Activated CD4-positive, alpha-beta memory T cell treated with anti-CD3 and anti-CD28 coated beads for 36 hours (primary cell): ENCODE measurements at regions of chr4 and their contacts with region 1.

Region 1: GRCh38 chr4:36325499-36325898 is 44.1 kb downstream of the DTHD1 start:
- DNase-seq: no peak
- H3K4me3 Mint-ChIP-seq: no peak overlapping the region
- H3K27ac Mint-ChIP-seq: peak overlapping the region; percentile 80
- H3K4me1 Mint-ChIP-seq: peaks cover 60% of the 10 kb centered on the region
- H3K27me3 Mint-ChIP-seq: no peaks in the 10 kb centered on the region

Region 2: DNA sequence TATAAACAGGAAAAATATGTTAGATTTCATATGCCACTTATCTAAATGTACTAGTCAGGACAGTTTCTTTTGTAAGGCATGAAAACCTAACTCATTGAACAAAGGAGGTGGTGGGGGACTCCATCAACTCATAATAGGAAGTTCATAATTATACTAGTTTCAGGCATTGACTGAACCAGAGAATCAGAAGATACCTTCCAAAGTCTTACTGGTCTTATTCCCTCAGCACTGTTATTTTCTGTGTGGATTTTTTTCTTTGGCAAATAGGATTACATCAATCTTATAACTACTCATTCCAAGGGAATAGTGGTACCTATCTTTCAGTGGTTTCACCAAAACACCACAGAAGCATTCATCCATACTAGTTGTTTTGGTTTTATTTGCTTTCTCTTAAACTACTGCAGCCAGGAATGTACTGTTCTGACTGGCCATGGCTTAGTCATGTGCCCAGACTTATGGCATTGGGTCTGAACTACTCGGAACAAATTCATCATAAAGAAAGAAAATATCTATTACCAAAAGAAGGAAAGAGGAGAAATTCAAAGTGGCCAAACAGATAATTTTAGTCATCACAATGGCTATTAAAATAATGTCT is 355.0 kb before region 1 on chr4:
- CTCF ChIA-PET with region 1: no interaction called
- POLR2A ChIA-PET with region 1: no interaction called
- intact Hi-C with region 1: loop called (anchors 10 kb)
- DNase-seq: peak; percentile 53
- H3K4me3 Mint-ChIP-seq: no peak overlapping the region
- H3K27ac Mint-ChIP-seq: no peak overlapping the region
- H3K4me1 Mint-ChIP-seq: peaks cover 11% of the 10 kb centered on the region
- H3K27me3 Mint-ChIP-seq: no peaks in the 10 kb centered on the region

Region 3: DNA sequence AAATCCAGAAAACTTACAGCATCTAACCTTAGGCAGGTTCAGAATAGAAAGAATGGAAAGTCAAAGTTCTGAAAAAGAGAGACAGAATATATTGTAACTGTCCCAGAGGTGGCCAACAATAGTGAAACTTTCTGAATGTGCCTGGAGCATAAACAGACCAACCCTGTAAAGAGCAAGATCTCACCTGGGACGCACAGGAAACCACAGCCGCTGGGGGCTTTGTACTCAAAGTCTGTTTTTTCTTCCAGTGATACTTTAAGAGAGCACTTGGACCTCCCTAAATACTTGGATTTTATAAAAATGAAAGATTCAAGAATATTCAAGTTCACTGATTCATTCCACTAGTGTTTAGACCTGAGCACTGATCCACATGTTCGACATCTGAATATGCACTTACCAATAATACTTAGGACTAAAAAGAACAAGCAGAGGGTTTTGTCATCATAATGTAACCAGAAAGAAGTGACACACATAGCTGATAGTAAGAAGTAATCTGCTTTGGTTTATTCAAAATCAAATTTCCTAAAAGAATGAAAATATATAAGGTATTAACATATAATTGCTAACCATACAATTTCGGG is 116.5 kb before region 1 on chr4:
- CTCF ChIA-PET with region 1: interaction called, 3 read pairs
- POLR2A ChIA-PET with region 1: no interaction called
- intact Hi-C with region 1: loop called (anchors 1 kb)
- DNase-seq: peak; percentile 54
- H3K4me3 Mint-ChIP-seq: no peak overlapping the region
- H3K27ac Mint-ChIP-seq: peak overlapping the region; percentile 73
- H3K4me1 Mint-ChIP-seq: peaks cover 52% of the 10 kb centered on the region
- H3K27me3 Mint-ChIP-seq: no peaks in the 10 kb centered on the region

Region 4: DNA sequence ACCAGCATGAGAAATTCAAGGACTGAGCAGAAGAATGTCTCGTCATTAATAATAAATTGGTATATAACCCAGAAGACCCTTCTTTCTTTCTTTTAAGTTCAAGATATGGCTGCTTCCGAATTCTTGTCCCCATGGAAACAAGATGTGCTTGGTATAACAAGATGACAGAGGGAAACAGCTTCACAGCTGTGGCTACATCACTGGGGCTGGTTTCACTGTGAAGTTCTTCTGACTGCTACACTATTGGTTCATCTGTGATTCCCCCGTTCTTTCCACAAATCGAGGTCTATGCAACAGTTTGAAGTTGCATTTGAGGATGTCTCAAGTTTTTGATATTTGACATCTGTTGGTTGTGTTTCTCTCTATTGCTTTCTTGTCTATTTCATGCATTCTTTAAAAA is 56.4 kb before region 1 on chr4:
- CTCF ChIA-PET with region 1: no interaction called
- POLR2A ChIA-PET with region 1: no interaction called
- intact Hi-C with region 1: loop called (anchors 1 kb)
- DNase-seq: peak; percentile 56
- H3K4me3 Mint-ChIP-seq: no peak overlapping the region
- H3K27ac Mint-ChIP-seq: peak overlapping the region; percentile 53
- H3K4me1 Mint-ChIP-seq: peaks cover 48% of the 10 kb centered on the region
- H3K27me3 Mint-ChIP-seq: no peaks in the 10 kb centered on the region

Region 5: DNA sequence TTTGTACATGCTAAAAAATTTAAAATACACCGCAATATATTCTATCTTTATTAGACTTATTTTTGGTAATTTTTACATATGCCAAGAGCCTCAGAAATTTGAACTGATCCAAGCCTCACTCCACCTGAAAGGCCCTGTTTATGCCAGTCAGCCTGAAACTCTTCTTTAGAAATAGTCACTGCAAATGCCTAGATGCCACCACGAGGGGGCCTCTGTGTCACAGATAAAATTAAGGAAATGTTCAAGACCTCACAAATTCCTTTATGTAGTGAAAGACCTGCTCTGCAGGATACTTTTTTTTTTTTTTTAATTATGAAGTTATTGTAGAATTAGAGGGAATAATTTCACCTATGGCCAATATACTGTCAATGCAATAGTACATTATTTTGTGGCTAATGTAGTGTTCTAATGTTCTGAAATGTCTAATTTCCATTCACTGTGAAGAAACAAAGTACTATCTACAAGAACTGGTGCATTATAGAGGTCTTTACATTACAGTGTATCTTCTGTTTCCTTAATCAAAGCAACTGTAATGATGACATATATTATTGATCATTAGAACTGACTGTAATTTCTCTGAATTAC is 25.7 kb after region 1 on chr4:
- CTCF ChIA-PET with region 1: interaction called, 7 read pairs
- POLR2A ChIA-PET with region 1: interaction called, 4 read pairs
- intact Hi-C with region 1: loop called (anchors 1 kb)
- DNase-seq: peak; percentile 85
- H3K4me3 Mint-ChIP-seq: no peak overlapping the region
- H3K27ac Mint-ChIP-seq: no peak overlapping the region
- H3K4me1 Mint-ChIP-seq: peaks cover 29% of the 10 kb centered on the region
- H3K27me3 Mint-ChIP-seq: no peaks in the 10 kb centered on the region

Region 6: DNA sequence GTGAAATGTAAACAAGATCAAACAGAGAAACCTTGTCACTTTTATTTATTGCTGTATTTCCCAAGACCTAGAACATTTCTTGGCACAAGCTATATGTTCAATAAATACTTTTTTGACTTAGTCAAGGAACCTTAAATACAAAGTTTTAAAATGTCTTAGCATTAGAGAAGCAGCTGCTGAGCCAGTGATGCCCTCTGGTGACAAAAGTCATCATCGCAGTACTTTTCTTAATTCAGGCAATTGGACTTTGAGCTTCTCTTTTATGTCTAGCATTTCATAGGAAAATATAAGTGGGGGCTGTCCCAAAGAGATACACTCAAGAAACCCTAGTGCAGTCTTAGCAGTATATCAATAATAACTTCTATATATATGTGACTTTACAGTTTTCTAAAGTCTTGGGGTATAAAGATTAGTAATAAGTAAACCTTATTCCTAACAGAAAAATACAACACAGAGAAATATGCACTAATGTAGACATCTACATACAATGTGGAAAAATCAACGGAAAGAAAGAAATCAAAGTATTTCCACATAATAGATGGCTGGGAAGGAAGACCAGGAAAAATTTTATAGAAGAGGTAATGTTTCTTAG is 74.4 kb after region 1 on chr4:
- CTCF ChIA-PET with region 1: interaction called, 16 read pairs
- POLR2A ChIA-PET with region 1: no interaction called
- intact Hi-C with region 1: no loop called
- DNase-seq: peak; percentile 61
- H3K4me3 Mint-ChIP-seq: no peak overlapping the region
- H3K27ac Mint-ChIP-seq: no peak overlapping the region
- H3K4me1 Mint-ChIP-seq: peaks cover 17% of the 10 kb centered on the region
- H3K27me3 Mint-ChIP-seq: no peaks in the 10 kb centered on the region

Region 7: DNA sequence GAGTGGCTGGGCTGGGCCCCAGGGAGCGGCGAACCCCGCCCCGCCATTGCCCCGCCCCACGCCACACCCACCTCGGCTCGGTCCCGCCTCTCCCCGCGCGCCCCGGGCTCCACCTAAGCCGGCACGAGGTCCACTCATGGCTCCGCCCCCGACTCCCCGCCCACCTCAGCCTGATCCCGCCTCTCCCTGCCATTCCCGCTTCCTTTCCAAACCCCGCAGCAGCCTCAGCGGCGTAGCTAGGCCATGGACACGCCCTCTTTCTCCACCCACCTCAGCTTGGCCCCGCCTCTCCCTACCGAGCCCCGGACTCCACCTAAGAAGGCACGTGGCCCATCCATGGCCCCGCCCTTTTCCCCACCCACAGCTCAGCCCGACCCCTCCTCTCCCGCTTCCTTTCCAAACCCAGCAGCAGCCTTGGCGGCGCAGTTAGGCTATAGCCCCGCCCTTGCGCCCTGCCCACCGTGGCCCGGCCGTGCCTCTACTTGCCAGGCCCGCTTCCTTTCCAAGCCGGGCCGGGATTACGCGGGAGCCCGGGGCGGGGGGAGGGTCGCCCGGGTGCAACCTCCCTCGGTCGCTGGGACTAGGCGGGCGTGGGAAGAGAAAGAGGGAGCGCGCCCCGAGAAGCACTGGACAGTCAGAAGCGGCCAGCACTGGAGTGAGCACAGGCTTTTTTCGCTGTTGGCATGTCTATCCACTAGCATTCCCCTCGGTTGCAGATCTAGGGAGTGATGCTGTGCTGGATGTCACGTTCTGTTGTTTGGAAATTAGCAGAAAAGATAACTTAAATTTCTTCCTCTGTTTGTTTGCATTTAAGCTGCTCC is 1361.1 kb after region 1 on chr4 and contains the start of gene RELL1:
- CTCF ChIA-PET with region 1: no interaction called
- POLR2A ChIA-PET with region 1: no interaction called
- intact Hi-C with region 1: loop called (anchors 2 kb)
- DNase-seq: peak; percentile 100
- H3K4me3 Mint-ChIP-seq: peak within 1 kb of the TSS; percentile 86
- H3K27ac Mint-ChIP-seq: peak within 1 kb of the TSS; percentile 91
- H3K4me1 Mint-ChIP-seq: peaks cover 34% of the 10 kb centered on the region
- H3K27me3 Mint-ChIP-seq: no peaks in the 10 kb centered on the region
- total RNA-seq, gene RELL1: 15.0 to 16.0 TPM